Mammary epithelial cell (primary cell): ENCODE measurements at regions of chr1 and their contacts with region 1.

Region 1: DNA sequence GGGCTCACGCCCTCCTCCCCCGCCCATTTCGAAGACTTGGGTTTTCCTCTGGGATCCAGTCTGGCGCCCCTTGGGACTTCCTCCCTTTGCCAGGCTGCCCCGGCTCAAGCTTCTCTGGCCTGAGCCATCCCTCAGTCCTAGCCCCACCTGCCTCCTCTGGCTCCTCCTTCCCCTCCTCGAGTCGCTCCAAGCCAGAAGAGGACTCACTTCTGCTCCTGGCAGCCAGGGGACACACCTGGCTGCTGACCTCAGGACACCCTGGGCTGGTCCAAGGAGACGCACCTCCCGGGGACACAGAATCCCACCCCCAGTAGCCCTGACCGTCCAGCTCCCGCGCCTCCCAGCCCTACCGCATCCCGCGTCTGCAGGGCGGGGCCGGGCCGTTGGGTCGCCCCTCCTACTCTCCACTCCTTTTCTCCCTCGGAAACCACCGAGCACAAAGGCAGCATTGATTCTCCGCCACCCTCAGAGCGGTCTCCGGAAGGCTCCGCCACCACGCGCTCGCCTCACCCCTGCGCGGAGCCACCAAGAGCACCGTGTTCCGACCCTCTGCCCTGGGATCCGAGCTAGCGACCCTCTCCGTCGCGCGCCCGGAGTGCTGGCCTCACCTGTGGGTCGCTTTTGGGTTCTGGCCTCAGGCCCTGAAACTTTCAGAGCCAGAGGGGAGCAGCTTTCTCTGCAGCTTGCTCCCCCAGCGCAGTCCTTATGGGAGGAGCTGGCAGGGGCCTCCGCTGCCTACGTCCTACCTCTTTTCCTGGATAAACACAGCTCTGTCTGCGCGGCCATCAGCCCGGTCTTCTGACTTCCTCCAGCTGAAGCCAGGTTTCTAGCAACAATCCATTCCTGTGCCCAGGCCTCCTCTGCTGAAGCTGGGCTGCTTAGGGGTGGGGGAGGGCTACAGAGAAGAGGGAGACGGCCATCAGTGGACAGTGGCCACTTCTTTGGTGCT is at the start of gene C2CD4D:
- DNase-seq: peak; percentile 94
- H3K4me3 ChIP-seq: peak within 1 kb of the TSS; percentile 41 to 53 (median 52)
- H3K27ac ChIP-seq: peak within 1 kb of the TSS; percentile 94
- H3K4me1 ChIP-seq: peaks cover 57% of the 10 kb centered on the region
- H3K27me3 ChIP-seq: no peaks in the 10 kb centered on the region
- CTCF ChIP-seq: peak in 1 of 2 donors; percentile 19
- total RNA-seq, gene C2CD4D: 0.17 to 0.33 TPM

Region 2: DNA sequence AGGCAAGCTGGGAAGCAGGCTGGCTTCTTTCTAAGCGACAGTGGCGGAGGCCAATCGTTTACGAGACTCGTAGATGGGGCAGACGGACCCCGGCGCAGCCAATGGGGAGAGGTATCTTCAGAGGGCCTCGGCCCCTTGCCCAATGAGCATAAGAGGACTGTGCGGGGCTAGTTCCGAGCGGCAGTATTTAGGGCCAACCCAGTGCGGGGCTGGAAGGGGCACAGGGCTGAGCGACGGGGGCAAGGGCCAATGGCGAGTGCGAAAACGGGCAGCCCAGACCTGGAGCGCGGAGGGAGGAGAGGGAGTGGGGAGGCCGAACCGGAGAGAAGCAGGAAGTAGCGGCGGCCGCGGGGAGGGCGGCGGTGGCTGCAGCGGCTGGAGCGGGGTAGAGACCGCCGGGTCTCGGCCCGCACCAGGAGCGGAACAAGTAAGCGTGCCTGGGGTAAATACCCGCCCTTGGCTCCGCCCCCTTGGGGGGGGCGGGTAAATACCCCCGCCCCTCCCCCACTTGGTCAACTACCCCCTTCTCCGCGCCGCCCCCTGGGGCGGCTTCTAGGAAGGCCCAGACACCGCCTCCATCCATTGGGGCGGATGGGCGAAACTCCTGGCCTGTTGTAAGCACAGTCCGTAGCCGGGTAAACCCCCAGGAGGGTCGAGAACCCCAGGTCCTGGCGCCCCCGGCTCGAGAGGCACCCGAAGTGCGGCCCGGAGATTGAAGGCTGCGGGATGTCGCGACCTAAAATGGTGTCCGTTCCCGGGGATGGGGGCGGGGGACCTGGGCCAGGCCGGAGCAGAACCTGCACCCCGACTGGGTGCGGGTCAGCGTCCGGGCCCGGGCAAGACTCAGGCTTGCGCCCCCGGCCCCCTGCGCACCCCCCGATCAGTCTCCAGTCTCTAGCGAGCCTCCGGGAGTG is 557.5 kb before region 1 on chr1 and contains the start of gene ZNF687:
- CTCF ChIA-PET with region 1: no interaction called
- dilution Hi-C with region 1: no loop called
- in situ Hi-C with region 1: no loop called
- intact Hi-C with region 1: loop called (anchors 1 kb)
- DNase-seq: peak; percentile 100
- H3K4me3 ChIP-seq: peak within 1 kb of the TSS; percentile 75 to 86 (median 85)
- H3K27ac ChIP-seq: peak within 1 kb of the TSS; percentile 97
- H3K4me1 ChIP-seq: peaks cover 16% of the 10 kb centered on the region
- H3K27me3 ChIP-seq: no peaks in the 10 kb centered on the region
- CTCF ChIP-seq: no peak
- total RNA-seq, gene ZNF687: 17.7 to 23.3 TPM

Region 3: GRCh38 chr1:151443846-151444782 is 395.6 kb before region 1 on chr1:
- CTCF ChIA-PET with region 1: no interaction called
- dilution Hi-C with region 1: no loop called
- in situ Hi-C with region 1: loop called (anchors 10 to 25 kb)
- intact Hi-C with region 1: loop called (anchors 1 kb)
- DNase-seq: peak; percentile 77
- H3K4me3 ChIP-seq: no peak overlapping the region
- H3K27ac ChIP-seq: no peak overlapping the region
- H3K4me1 ChIP-seq: peaks cover 10% of the 10 kb centered on the region
- H3K27me3 ChIP-seq: no peaks in the 10 kb centered on the region
- CTCF ChIP-seq: peak; percentile 77 to 85

Region 4: GRCh38 chr1:151594143-151594625 is 245.5 kb before region 1 on chr1:
- CTCF ChIA-PET with region 1: no interaction called
- dilution Hi-C with region 1: no loop called
- in situ Hi-C with region 1: no loop called
- intact Hi-C with region 1: loop called (anchors 1 kb)
- DNase-seq: peak; percentile 61
- H3K4me3 ChIP-seq: no peak overlapping the region
- H3K27ac ChIP-seq: no peak overlapping the region
- H3K4me1 ChIP-seq: no peaks in the 10 kb centered on the region
- H3K27me3 ChIP-seq: no peaks in the 10 kb centered on the region
- CTCF ChIP-seq: peak; percentile 93 to 98

Region 5: GRCh38 chr1:151693076-151693651 is 146.6 kb before region 1 on chr1:
- CTCF ChIA-PET with region 1: no interaction called
- dilution Hi-C with region 1: no loop called
- in situ Hi-C with region 1: no loop called
- intact Hi-C with region 1: loop called (anchors 1 kb)
- DNase-seq: peak; percentile 26
- H3K4me3 ChIP-seq: no peak overlapping the region
- H3K27ac ChIP-seq: no peak overlapping the region
- H3K4me1 ChIP-seq: no peaks in the 10 kb centered on the region
- H3K27me3 ChIP-seq: no peaks in the 10 kb centered on the region
- CTCF ChIP-seq: peak; percentile 72 to 79

Region 6: DNA sequence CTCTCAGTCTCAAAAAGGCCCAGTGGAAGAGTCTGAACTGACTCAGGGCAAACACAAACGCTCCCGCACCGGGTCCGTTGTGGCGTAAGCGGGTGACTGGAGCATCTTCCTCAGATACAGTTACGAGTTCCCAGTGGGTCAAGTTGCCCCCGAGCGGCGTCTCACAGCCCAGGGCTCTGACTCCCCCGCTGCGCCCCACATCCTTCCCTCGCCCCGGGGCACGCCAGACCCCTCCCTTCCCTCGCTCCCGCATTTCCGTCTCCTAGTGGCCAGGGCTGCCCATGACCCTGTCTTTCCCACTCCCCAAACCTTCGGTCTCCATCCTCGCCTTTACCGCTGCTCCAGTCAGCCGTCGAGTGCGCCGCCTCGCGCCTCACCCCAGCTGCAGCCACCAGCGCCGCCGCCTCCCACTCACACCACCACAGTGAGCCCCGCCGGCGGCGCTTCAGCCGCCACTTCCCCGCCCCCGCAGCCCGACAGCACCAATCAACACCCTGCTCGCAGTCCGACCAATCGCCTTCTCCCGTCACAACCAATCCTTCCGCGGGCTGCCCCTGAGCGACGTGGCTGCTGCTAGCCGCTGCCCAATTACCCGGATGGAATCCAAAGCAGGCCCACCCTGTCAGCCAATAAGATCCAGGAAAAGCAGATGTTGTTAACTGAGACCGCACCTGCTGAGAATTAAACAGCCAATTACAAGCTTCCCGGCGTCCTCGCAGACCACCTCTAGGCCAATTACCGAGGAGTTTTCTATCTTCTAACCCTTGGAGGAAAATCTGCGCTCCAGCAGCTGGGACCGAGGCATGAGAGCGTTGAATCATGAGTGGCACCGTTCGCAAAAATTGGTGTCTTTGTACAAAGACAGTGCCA is 49.4 kb before region 1 on chr1 and contains the start of gene TDRKH:
- CTCF ChIA-PET with region 1: no interaction called
- dilution Hi-C with region 1: no loop called
- in situ Hi-C with region 1: no loop called
- intact Hi-C with region 1: loop called (anchors 1 kb)
- DNase-seq: peak; percentile 100
- H3K4me3 ChIP-seq: peak within 1 kb of the TSS; percentile 65 to 98 (median 72)
- H3K27ac ChIP-seq: no peak within 1 kb of the TSS
- H3K4me1 ChIP-seq: no peaks in the 10 kb centered on the region
- H3K27me3 ChIP-seq: no peaks in the 10 kb centered on the region
- CTCF ChIP-seq: peak in 1 of 2 donors; percentile 39
- total RNA-seq, gene TDRKH: 3.0 to 9.3 TPM